Left cardiac atrium (tissue), 4 donors: ENCODE measurements at regions of chr15 and their contacts with region 1.

Region 1: DNA sequence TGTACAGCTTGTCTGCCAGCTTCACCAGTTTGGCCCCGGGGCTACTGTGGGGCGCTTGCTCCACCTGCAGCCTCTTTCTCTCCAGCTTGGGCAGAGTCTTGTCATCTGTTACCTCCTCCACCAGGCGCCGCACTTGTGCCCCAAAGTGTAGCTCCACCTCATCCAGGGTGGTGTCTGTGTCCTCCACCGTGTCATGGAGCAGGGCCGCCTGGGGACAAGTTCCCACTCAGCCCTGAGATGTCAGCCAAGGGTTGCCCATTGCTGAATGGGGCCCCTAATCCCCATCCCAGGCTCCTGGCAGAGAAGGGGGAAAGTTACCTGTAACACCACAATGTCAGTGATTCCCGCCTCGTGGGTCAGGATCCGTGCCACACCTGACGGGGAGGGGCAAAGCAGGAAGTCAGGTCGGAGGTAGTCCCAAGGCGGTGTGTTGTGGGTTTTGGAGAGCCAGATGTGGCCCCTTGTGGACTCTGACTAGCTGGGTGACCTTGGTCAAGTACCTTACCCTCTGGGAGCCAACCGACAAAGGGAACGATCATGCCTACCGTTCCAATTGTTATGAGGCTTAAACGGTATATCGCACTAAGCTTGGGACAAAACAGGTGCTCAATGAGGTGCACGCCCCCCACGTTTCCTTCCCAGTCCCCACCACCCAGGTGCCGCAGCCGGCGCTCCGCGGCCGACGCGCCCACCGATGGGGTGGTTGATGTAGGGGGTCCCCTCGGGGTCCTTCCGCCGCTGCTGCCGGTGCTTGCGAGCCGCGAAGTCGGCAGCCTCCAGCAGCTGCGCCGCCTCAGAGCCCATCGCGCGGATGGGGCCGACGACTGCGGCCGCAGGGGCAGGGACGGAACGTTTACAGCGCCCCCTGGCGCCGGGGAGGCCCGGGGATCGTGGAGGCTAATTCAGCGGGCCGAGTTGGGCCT is at the start of gene HDDC3:
- DNase-seq: peak; percentile 93
- ATAC-seq: peak; percentile 62 to 71
- total RNA-seq, gene HDDC3: 12.2 to 17.1 TPM

Region 2: DNA sequence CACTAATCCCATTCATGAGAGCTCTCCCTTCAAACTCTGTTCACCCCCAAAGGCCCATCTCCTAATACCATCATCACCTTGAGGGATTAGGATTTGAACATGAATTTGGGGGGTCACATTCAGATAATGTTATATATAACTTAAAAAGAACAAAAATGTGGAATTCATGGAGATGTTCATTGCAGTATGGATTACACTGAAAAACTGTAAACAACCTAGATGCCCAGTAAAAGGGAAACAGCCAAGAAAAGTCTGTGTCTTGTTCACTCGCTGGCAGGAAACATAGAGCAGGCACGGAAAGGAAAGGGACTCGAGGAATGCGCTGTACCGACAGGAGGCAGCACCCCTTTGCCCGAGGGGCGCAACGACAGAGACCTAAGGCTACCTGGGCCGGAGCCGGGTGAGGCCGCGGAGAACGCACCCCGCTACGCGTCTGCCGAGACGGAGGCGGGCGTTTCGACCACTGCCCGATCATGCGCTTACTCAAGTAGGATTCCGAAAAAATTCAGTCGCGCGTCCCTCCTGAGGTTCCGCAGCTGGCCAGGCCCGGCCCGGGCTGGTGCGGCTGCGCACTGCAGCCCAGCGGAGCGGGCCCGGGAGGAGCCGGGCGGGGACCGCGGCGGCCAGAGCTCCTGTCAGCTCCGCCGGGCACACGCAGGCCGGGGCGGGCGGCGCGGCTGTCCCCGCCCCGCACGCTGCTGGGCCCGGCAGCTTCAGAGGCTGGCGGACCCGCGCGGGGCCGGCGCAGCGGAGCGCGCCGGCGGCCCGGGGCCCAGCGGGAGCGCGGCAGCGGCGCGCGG is 29.8 kb before region 1 on chr15:
- intact Hi-C with region 1: loop called in 1 of 2 experiments (anchors 2 kb)
- DNase-seq: peak; percentile 76
- ATAC-seq: peak; percentile 92 to 94

Region 3: DNA sequence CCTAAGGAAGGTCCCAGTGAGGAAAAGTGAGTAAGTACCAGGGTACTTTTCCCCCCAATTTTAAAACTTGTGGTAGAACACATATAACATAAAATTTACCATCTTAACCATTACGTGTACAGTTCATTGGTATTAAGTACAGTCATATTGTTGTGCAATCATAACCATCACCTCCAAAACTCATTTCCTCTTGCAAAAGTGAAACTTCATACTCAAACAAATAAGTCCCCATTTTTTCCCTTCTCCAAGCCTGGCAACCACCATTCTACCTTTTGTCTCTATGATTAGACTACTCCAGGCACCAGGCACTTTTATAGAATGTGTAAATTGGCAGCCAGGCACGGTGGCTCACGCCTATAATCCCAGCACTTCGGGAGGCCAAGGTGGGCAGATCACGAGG is 50.1 kb after region 1 on chr15:
- intact Hi-C with region 1: no loop called
- DNase-seq: no peak
- ATAC-seq: no peak